ENCODE measurements at regions of chrX and their contacts with region 1.

Region 1: GRCh38 chrX:118823263-118824172 is at the start of gene ZCCHC12:
- DNase-seq: peak; percentile 61
- ATAC-seq: peak; percentile 73
- total RNA-seq, gene ZCCHC12: not detected

Region 2: DNA sequence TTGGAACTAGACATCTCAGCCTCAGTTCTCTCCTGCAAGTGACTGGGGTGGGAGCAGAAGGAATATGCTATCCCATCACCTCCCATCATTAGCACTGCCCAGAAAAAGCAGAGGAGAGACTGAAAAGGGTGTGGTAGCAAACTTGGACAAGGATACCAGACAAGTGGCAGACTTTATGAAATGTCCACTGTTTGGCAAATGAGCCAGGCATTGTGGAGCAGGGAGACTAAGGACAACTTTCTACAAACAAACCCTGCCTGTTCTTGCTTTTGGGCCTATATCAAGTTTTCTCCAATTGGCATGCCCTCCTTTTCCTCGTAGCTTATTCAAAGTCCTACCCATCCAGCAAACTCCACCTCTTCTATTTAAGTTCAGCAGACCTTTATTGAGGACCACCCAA is 41.7 kb after region 1 on chrX:
- intact Hi-C with region 1: loop called (anchors 1 kb)
- DNase-seq: no peak
- ATAC-seq: no peak

Measured in sciatic nerve (tissue), 2 donors.